Heart left ventricle (tissue), 16 donors: ENCODE measurements at regions of chr3 and their contacts with region 1.

Region 1: GRCh38 chr3:17820704-17821103 is 78.3 kb upstream of the TBC1D5 start:
- DNase-seq: no peak
- ATAC-seq: no peak
- H3K4me3 ChIP-seq: no peak overlapping the region
- H3K27ac ChIP-seq: no peak overlapping the region
- H3K4me1 ChIP-seq: no peaks in the 10 kb centered on the region
- H3K27me3 ChIP-seq: no peaks in the 10 kb centered on the region
- CTCF ChIP-seq: no peak
- POLR2A ChIP-seq: no peak

Region 2: DNA sequence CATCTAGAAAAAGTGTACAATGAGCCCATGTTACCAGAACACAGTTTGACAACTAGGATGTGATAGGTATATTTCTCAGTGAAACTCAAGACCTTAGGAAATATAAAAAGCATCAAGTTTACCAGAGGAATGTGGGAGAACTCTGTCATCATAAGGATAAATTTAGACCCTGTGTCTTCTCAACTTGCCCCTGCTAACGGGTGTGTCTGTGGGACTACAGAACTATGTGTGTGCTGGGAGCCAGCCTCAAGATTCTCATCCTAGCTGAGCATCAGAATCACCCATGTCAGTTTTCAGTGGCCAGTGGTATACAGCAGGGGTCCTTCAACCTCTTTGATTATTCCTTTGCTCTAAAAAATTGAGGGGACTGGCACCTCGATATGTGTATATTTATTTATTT is 542.7 kb before region 1 on chr3:
- intact Hi-C with region 1: loop called in 1 of 10 experiments (anchors 10 kb)
- DNase-seq: no peak
- ATAC-seq: no peak
- H3K4me3 ChIP-seq: no peak overlapping the region
- H3K27ac ChIP-seq: no peak overlapping the region
- H3K4me1 ChIP-seq: no peaks in the 10 kb centered on the region
- H3K27me3 ChIP-seq: no peaks in the 10 kb centered on the region
- CTCF ChIP-seq: no peak
- POLR2A ChIP-seq: no peak

Region 3: GRCh38 chr3:17865631-17866030 is 44.9 kb after region 1 on chr3:
- intact Hi-C with region 1: no loop called
- DNase-seq: no peak
- ATAC-seq: no peak
- H3K4me3 ChIP-seq: no peak overlapping the region
- H3K27ac ChIP-seq: no peak overlapping the region
- H3K4me1 ChIP-seq: no peaks in the 10 kb centered on the region
- H3K27me3 ChIP-seq: no peaks in the 10 kb centered on the region
- CTCF ChIP-seq: no peak
- POLR2A ChIP-seq: no peak

Region 4: DNA sequence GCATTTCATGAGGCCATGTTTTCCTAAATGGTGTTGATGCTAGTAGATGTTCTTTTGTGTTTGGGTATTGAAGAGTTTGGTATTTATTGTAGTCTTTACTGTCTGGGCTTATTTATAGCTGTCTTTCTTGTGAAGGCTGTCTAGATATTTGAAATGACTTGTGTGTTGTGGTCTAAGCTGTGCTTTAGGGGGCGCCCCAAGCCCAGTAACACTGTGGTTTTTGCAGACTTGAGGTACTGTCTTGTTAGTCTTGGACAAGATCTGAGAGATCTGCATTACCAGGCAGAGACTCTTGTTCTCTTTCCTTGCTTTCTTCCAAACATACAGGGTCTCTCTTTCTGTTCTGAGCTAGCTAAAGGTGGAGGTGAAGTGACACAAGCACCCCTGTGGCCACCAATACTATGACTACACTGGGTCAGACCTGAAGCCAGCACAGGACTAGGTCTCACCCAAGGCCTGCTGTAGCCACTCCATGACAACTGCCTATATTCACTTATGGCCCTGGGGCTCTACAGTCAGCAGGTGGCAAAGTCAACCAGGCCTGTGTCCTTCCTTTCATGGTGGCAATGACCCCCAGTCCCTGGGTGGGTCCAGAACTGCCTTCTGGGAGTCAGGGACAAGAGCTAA is 73.8 kb after region 1 on chr3:
- intact Hi-C with region 1: no loop called
- DNase-seq: no peak
- ATAC-seq: no peak
- H3K4me3 ChIP-seq: no peak overlapping the region
- H3K27ac ChIP-seq: no peak overlapping the region
- H3K4me1 ChIP-seq: no peaks in the 10 kb centered on the region
- H3K27me3 ChIP-seq: no peaks in the 10 kb centered on the region
- CTCF ChIP-seq: peak in 7 of 12 donors; percentile 10 to 30 (median 22)
- POLR2A ChIP-seq: no peak